ENCODE measurements at regions of chrX and their contacts with region 1.

Region 1: DNA sequence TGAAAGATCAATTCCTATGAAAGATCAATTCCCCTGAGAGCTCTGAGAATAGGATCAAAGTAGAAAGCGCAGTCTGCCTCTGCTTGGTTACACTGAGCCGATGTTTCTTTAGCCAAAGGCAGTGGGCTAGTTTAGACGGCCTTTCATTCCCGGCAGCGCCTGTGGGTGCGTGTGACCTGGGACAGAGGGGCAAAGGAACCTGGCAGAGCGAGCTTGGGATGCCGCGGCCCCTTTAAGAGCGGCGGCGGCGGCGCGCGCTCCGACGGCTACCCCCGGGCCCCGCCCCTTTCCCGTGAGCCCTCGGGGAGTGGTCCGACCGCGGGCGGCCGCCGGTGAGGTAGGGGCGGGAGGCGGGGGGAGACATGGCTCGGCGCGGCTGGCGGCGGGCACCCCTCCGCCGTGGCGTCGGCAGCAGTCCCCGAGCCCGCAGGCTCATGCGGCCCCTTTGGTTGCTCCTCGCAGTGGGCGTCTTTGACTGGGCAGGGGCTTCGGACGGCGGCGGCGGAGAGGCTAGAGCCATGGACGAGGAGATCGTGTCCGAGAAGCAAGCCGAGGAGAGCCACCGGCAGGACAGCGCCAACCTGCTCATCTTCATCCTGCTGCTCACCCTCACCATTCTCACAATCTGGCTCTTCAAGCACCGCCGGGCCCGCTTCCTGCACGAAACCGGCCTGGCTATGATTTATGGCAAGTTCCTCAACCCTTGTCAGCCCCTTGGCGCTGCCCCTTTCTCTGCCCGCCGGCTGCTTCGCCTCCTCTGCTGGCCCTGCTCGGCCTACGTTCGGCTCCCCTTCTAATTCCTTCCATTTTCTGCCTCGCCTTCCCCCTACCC is at the start of gene SLC9A6:
- DNase-seq: peak; percentile 52 to 83 (median 65)
- H3K4me3 ChIP-seq: peak within 1 kb of the TSS; percentile 33 to 83 (median 70)
- H3K27ac ChIP-seq: peak within 1 kb of the TSS in 55 of 59 donors; percentile 1 to 89 (median 76)
- H3K27me3 ChIP-seq: peaks cover 0 to 26% (median 0%) of the 10 kb centered on the region in 45 donors
- CTCF ChIP-seq: peak in 2 of 56 donors; percentile 14 to 27
- total RNA-seq, gene SLC9A6: 39.0 to 123 (median 88.4) TPM

Region 2: GRCh38 chrX:135931644-135932487 is 53.5 kb before region 1 on chrX:
- intact Hi-C with region 1: no loop called
- DNase-seq: peak in 9 of 10 donors; percentile 15 to 52 (median 45)
- H3K4me3 ChIP-seq: no peak overlapping the region
- H3K27ac ChIP-seq: no peak overlapping the region
- H3K27me3 ChIP-seq: peaks cover 0 to 70% (median 14%) of the 10 kb centered on the region in 45 donors
- CTCF ChIP-seq: peak; percentile 17 to 73 (median 57)

Region 3: DNA sequence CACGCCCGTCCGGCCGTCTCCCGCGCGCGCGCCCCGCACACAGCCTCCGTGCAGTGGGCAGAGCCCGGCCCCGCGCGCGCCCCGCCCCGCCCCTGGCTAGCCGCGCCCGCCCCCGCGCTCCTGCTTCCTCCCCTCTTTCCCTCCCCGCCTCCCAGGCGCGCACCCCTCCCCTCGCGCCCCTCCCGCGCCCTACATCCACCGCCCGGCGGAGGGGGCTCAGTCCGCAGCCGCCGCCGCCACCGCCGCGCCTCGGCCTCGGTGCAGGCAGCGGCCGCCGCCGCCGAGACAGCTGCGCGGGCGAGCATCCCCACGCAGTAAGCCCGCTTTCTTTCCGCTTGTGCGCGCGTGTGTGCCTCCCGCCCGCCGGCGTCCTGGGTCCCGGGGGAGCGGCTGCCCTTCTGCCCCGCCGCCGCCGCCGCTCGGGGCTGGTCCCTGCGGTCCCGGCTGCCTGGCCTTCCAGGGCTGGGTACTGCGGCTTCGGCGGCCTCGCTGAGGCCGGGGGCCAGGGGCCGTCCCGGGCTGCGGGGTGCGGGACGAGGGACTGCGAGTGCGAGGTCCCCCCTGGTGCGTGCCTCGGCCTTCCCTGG is 162.1 kb after region 1 on chrX and contains the start of gene FHL1:
- intact Hi-C with region 1: loop called in 1 of 2 experiments (anchors 5 kb)
- DNase-seq: peak in 9 of 10 donors; percentile 16 to 68 (median 53)
- H3K4me3 ChIP-seq: peak within 1 kb of the TSS; percentile 13 to 77 (median 61)
- H3K27ac ChIP-seq: peak within 1 kb of the TSS in 50 of 59 donors; percentile 15 to 88 (median 64)
- H3K27me3 ChIP-seq: peaks cover 0 to 30% (median 6%) of the 10 kb centered on the region in 45 donors
- CTCF ChIP-seq: no peak
- total RNA-seq, gene FHL1: 140 to 347 (median 232) TPM

Region 4: DNA sequence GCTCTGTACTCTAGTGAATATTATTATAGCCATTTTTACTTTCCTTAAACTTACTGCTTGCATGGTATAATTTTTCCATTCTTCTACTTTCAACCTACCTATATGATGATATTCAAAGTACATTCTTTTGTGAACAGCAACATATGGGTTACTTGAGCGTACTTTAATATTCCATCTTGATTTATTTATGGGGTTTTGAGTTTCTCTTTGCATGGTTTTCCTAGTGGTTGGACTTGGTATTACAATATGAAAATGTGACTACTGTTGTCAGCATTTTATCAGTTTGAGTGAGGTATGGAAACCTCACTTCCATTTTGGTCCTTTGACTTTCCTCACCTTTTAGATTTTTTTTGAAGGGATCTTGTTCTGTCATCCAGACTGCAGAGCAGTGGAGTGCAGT is 351.3 kb after region 1 on chrX:
- intact Hi-C with region 1: no loop called
- DNase-seq: no peak
- H3K4me3 ChIP-seq: no peak overlapping the region
- H3K27ac ChIP-seq: no peak overlapping the region
- H3K27me3 ChIP-seq: peaks cover 0 to 31% (median 8%) of the 10 kb centered on the region in 45 donors
- CTCF ChIP-seq: peak in 25 of 56 donors; percentile 10 to 61 (median 31)

Region 5: DNA sequence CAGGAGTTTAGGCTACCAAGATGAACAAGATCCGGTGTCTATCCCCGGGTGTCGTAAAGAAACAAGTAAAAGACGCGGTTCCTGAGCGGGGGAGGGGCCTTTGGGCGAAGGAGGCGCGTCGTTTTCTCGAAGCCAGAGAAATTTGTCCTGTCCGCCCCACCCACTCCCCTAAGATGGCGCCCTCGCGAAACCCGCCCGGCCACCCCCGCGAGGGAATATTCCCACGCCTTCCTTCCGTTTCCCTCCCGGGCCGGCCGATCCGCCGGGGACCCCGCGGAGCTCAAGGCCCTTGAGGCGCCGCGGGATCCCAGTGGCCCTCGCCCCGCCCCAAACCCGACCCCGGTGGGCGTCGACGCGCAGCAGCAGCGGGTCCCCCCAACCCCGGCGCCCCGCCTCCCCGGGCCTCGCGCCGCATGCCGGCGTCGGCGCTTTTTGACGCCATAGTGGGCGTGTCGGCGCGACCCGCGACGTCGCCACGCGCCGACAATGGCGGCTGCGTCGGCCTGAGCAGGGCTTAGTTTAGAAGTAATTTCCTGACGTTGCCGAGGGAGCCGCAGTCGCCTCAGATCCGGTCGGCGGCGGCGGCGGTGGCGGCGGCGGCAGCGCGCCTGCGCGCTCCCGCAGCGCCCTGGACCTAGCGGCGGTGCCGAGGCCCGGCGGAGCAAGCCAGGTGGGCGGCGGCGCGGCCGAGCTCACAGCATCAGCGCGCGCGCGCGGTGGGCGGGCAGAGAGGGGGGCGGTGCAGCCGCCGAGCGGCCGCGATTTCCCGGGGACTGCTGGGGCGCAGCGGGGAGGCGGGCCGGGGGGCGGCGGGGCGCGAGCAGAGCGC is 511.6 kb after region 1 on chrX and contains the start of gene HTATSF1:
- intact Hi-C with region 1: loop called in 1 of 2 experiments (anchors 5 kb)
- DNase-seq: peak; percentile 52 to 84 (median 67)
- H3K4me3 ChIP-seq: peak within 1 kb of the TSS; percentile 50 to 84 (median 71)
- H3K27ac ChIP-seq: peak within 1 kb of the TSS; percentile 65 to 97 (median 93)
- H3K27me3 ChIP-seq: peaks cover 0 to 47% (median 9%) of the 10 kb centered on the region in 45 donors
- CTCF ChIP-seq: peak in 4 of 56 donors; percentile 8 to 27 (median 16)
- total RNA-seq, gene HTATSF1: 34.5 to 63.0 (median 48.9) TPM

Measured in dorsolateral prefrontal cortex (tissue), 120 donors.